Activated CD8-positive, alpha-beta T cell treated with anti-CD3 and anti-CD28 coated beads for 36 hours (primary cell): ENCODE measurements at regions of chr21 and their contacts with region 1.

Region 1: DNA sequence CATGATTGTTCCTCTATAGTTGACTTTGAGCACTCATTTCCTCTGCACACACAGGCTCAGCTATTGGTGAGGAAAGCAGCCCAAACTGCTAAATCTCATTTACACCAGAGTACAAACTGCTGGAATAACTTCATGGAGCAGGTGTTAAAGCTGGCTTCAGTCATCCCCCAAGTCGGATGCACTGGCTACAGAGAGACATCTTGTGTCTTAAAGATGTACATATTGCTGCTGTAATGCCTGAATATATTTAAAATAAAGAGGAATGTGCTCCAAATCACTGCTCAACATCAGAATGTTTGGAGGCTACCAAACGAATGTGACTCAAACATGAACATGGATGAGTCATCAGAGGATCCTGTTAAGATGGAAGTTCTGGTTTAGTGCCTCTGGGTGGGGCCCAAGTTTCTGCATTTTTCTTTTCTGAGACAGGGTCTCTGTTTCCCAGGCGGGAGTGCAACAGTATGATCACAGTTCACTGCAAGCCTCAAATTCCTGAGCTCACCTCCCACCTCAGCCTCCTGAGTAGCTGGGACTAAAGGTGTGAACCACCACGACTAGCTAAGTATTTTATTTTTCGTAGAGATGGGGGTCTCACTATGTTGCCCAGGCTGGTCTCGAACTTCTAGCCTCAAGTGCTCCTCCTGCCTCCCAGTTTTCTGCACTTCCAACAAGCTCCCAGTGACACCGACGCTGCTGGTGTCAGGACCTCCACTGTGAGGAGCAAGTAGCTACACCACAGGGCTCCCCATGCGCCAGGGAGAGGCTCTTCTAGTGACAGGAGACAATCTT is 79.0 kb upstream of the KRTAP19-8 start:
- DNase-seq: no peak
- ATAC-seq: peak; percentile 73
- H3K4me3 Mint-ChIP-seq: no peak overlapping the region
- H3K27ac Mint-ChIP-seq: no peak overlapping the region
- H3K4me1 Mint-ChIP-seq: peaks cover 8% of the 10 kb centered on the region
- H3K27me3 Mint-ChIP-seq: no peaks in the 10 kb centered on the region
- CTCF ChIP-seq: peak; percentile 44

Region 2: GRCh38 chr21:31098576-31099005 is 18.7 kb before region 1 on chr21:
- CTCF ChIA-PET with region 1: interaction called, 19 read pairs
- POLR2A ChIA-PET with region 1: no interaction called
- intact Hi-C with region 1: no loop called
- DNase-seq: peak; percentile 84
- ATAC-seq: peak; percentile 87
- H3K4me3 Mint-ChIP-seq: no peak overlapping the region
- H3K27ac Mint-ChIP-seq: no peak overlapping the region
- H3K4me1 Mint-ChIP-seq: peaks cover 18% of the 10 kb centered on the region
- H3K27me3 Mint-ChIP-seq: peaks cover 2% of the 10 kb centered on the region
- CTCF ChIP-seq: peak; percentile 92